ENCODE measurements at regions of chr22 and their contacts with region 1.

Region 1: GRCh38 chr22:25057013-25057881 is 104.7 kb downstream of the KIAA1671 start:
- DNase-seq: peak; percentile 84
- ATAC-seq: peak; percentile 70
- H3K4me3 Mint-ChIP-seq: no peak overlapping the region
- H3K27ac Mint-ChIP-seq: no peak overlapping the region
- H3K4me1 Mint-ChIP-seq: peaks cover 41% of the 10 kb centered on the region
- H3K27me3 Mint-ChIP-seq: no peaks in the 10 kb centered on the region

Region 2: DNA sequence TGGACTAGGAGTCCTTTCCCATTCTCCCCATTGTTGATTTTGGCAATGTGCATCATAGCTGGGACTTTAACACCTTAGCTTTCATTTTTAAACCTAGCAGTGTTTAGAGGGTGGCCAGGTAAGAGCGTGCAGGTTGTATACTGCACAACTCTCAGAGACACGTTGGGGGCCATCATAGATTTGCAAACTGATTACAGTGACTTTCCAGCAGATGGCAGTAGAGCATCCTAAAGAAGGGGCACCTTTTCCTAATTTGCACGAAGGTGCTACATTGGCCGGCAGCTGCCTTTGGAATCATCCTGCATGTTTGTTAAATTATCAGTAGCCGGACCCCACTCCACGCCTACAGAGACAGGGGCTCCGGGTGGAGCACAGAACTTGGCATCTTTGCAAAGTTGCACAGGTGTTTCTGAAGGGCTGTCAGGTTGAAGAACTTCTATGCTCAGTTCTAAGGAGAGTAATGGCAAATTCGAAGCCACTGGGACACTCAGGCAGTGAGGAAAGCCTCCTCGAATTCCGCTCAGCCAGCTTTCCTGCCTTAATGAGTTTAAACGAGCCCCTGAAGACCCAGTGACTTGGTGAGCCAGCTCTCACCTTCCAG is 118.4 kb before region 1 on chr22:
- CTCF ChIA-PET with region 1: interaction called, 111 read pairs
- POLR2A ChIA-PET with region 1: no interaction called
- DNase-seq: peak; percentile 43
- ATAC-seq: peak; percentile 36
- H3K4me3 Mint-ChIP-seq: no peak overlapping the region
- H3K27ac Mint-ChIP-seq: no peak overlapping the region
- H3K4me1 Mint-ChIP-seq: no peaks in the 10 kb centered on the region
- H3K27me3 Mint-ChIP-seq: no peaks in the 10 kb centered on the region

Region 3: DNA sequence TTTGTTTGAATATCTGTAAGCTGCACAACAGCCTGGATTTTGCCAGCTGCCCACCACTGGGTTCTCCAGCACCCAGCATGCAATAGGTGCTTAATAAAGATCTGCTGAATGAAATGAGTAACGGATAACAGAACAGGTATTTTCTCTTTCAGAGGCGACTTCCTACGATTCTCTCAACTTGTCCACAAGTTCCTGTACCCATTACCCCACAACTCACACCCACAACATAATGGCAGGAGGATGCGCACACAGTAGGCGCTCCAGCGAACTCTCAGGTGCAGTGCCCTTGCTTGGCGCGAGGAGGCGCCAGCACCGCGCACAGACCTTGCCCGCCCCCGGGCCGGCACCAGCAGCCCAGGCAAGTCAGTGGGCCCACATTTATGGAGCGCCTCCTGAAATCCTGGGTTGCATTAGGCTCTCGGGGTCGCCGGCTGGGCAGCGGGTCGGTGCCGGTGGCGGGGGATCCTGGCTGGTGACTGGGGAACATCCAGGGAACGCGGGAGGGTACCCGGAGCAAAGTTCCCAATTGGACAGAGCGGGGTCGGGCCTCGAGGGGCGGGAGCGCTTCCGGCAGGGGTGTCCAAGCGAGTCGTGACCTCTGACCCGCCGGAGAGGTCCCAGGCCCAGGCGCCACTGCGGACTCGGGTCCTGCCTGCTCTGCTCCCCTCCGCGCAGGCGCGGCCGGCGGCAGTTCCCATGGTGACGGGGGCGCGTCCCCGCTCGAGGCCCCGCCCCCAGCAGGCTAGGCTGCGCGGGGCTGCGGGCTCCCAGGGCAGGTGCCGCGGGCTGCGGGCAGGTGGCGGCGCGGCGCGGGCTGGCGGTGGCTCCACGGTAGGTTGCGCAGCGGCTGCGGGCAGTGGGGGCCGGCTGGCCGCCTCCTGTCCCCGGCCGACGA is 105.1 kb before region 1 on chr22 and contains the start of gene KIAA1671:
- CTCF ChIA-PET with region 1: interaction called, 111 read pairs
- POLR2A ChIA-PET with region 1: no interaction called
- DNase-seq: peak; percentile 85
- ATAC-seq: peak; percentile 94
- H3K4me3 Mint-ChIP-seq: peak within 1 kb of the TSS; percentile 78
- H3K27ac Mint-ChIP-seq: no peak within 1 kb of the TSS
- H3K4me1 Mint-ChIP-seq: peaks cover 21% of the 10 kb centered on the region
- H3K27me3 Mint-ChIP-seq: peaks cover 57% of the 10 kb centered on the region
- total RNA-seq, gene KIAA1671: 5.1 to 5.5 TPM

Region 4: DNA sequence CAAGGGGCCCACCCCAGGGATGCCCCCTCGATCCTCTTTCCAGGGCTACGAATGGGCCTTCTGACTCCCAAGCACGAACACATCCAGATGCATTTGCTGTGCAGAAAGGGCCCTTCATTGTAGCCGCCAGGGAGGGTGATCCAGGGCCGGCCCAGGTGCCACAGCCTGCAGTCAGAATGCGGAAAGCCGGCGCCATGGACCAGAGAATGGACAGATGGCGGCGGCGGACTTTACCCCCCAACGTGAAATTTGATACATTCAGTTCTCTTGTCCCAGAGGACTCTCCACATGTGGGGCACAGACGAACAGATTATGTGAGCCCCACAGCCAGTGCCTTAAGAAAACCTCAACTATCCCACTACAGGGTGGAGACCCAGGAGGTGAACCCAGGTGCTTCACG is 17.5 kb before region 1 on chr22:
- CTCF ChIA-PET with region 1: no interaction called
- POLR2A ChIA-PET with region 1: no interaction called
- DNase-seq: no peak
- ATAC-seq: no peak
- H3K4me3 Mint-ChIP-seq: no peak overlapping the region
- H3K27ac Mint-ChIP-seq: no peak overlapping the region
- H3K4me1 Mint-ChIP-seq: no peaks in the 10 kb centered on the region
- H3K27me3 Mint-ChIP-seq: no peaks in the 10 kb centered on the region

Region 5: GRCh38 chr22:25067851-25068421 is 10.7 kb after region 1 on chr22:
- CTCF ChIA-PET with region 1: interaction called, 25 read pairs
- POLR2A ChIA-PET with region 1: interaction called, 5 read pairs
- DNase-seq: peak; percentile 93
- ATAC-seq: peak; percentile 89
- H3K4me3 Mint-ChIP-seq: peak overlapping the region; percentile 80
- H3K27ac Mint-ChIP-seq: peak overlapping the region; percentile 95
- H3K4me1 Mint-ChIP-seq: peaks cover 92% of the 10 kb centered on the region
- H3K27me3 Mint-ChIP-seq: no peaks in the 10 kb centered on the region

Region 6: DNA sequence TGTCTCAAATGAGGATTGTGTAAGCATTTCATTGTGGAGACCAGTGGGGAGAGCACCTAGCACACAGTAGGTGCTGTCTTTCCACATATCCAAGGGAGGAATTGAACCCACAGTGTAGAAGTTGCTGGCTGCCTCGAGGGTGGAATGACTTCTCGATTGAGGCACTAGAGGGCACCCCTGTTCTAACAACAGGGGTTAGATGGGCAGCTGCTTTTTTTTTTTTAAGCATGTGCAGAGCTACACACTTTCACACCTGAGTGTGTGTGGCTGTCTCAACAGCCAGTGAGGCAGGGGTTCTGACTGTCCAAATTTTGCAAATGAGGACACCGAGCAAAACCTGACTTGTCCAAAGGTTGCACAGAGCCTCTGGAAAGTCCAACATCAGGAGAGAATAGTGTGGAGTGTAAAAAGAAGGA is 24.2 kb after region 1 on chr22:
- CTCF ChIA-PET with region 1: interaction called, 112 read pairs
- POLR2A ChIA-PET with region 1: interaction called, 3 read pairs
- DNase-seq: peak; percentile 74
- ATAC-seq: peak; percentile 63
- H3K4me3 Mint-ChIP-seq: no peak overlapping the region
- H3K27ac Mint-ChIP-seq: no peak overlapping the region
- H3K4me1 Mint-ChIP-seq: peaks cover 65% of the 10 kb centered on the region
- H3K27me3 Mint-ChIP-seq: no peaks in the 10 kb centered on the region

Region 7: GRCh38 chr22:25110846-25111578 is 53.8 kb after region 1 on chr22:
- CTCF ChIA-PET with region 1: interaction called, 12 read pairs
- POLR2A ChIA-PET with region 1: no interaction called
- DNase-seq: peak; percentile 70
- ATAC-seq: peak; percentile 90
- H3K4me3 Mint-ChIP-seq: peak overlapping the region; percentile 71
- H3K27ac Mint-ChIP-seq: peak overlapping the region; percentile 16
- H3K4me1 Mint-ChIP-seq: peaks cover 20% of the 10 kb centered on the region
- H3K27me3 Mint-ChIP-seq: no peaks in the 10 kb centered on the region